ENCODE measurements at regions of chrX and their contacts with region 1.

Region 1: GRCh38 chrX:35406386-35406785 is 391.8 kb upstream of the MAGEB16 start:
- DNase-seq: no peak
- H3K4me3 ChIP-seq: no peak overlapping the region
- CTCF ChIP-seq: no peak
- POLR2A ChIP-seq: no peak

Region 2: GRCh38 chrX:35357656-35358055 is 48.7 kb before region 1 on chrX:
- intact Hi-C with region 1: loop called (anchors 1 kb)
- DNase-seq: no peak
- H3K4me3 ChIP-seq: no peak overlapping the region
- CTCF ChIP-seq: no peak
- POLR2A ChIP-seq: no peak

Region 3: DNA sequence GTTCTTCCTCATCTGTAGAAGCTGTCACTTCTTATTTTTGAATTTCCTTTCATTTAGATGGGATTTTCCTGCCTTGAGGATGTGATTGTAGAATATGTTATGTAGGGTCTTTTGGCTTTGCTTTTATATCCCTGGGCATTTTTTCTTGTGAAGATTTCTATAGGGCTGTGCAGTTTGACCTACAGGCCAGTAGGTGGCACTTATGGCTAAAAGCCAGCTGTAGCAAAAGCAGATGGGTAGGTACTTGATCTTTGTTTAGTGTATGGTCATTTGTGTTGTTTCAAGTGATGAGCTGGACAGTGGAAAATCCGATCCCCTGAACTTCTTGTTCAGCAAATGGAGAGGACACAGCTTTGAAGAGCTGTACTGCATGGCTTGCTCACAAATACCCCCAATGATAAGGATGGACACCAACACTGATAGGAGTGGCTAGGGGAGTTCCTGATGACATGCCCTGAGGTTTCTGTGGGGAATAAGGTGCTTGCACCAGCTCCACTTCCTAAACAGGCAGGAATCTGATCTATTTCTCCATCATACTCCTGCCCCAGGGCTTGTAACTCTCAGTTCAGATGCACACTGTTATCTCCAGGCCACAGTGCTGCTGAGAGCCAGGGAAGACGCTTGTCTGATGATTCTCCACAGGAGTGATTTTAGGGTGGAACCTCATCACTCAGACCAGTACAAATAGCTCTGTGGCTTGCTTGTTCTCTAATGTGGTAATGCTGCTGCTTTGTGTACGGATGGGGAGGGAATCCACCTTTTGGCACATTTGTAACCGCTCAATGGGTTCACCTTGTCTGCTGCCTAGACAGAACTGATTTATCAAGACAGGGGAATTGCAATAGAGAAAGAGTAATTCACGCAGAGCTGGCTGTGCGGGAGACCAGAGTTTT is 25.3 kb before region 1 on chrX:
- intact Hi-C with region 1: no loop called
- DNase-seq: no peak
- H3K4me3 ChIP-seq: no peak overlapping the region
- CTCF ChIP-seq: no peak
- POLR2A ChIP-seq: no peak

Measured in lower leg skin (tissue), 4 donors.